HepG2 (cell line): ENCODE measurements at regions of chr2 and their contacts with region 1.

Region 1: DNA sequence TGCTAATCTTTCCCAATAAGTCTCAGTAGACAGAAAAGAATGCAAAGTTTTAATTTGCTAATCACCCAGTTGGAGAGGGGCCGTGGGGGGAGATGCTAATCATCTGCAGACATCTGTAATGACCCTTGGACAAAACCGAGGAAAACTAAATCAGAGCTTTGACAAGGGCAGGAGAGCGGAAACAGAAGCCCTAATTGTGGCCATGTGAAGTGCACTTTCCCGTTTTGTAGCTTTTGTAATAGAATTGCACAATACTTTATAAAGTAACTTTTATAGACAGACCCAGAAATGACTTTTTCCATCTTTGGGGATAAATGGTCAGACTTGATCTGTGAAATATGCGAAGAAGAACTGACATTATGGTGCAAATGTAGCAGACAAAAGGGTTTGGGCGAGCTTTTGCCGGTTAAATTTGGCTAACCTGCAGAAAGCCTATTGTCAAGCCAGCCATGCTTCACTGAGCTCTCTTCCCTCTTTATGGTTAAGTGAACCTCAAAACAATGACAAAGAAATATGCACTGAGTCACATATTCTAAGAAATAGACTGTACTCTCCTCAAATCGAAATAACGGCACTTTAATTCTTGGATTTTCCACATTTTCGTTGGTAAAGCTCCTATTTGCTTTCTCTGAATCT is 980.1 kb upstream of the POU3F3 start:
- DNase-seq: no peak
- ATAC-seq: no peak
- H3K4me3 ChIP-seq: no peak overlapping the region
- H3K27ac ChIP-seq: no peak overlapping the region
- H3K4me1 ChIP-seq: no peaks in the 10 kb centered on the region
- H3K27me3 ChIP-seq: no peaks in the 10 kb centered on the region
- CTCF ChIP-seq: no peak
- EP300 ChIP-seq: no peak
- POLR2A ChIP-seq: no peak
- RAD21 ChIP-seq: no peak

Region 2: GRCh38 chr2:103840276-103840675 is 33.6 kb before region 1 on chr2:
- CTCF ChIA-PET with region 1: no interaction called
- POLR2A ChIA-PET with region 1: no interaction called
- in situ Hi-C with region 1: no loop called
- intact Hi-C with region 1: no loop called
- DNase-seq: no peak
- ATAC-seq: no peak
- H3K4me3 ChIP-seq: no peak overlapping the region
- H3K27ac ChIP-seq: no peak overlapping the region
- H3K4me1 ChIP-seq: no peaks in the 10 kb centered on the region
- H3K27me3 ChIP-seq: no peaks in the 10 kb centered on the region
- CTCF ChIP-seq: no peak
- EP300 ChIP-seq: no peak
- POLR2A ChIP-seq: no peak
- RAD21 ChIP-seq: no peak

Region 3: DNA sequence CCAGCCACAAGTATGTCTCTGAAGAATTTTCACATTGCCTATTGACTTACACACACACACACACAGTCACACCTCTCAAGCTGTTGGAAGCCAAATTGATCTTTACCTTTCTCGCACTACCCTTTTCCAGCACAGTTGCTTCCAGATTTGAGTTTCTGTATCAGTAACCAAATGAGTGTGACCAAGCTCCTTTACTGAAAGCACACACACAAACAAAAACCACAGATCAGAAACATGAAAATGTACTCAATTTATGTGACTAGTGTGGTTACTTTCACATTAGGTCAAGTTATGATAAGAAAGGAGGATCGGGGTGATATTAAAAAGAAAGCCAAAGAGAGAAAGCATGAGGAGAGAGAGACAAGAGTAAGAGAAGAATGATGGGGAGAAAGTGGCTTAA is 13.8 kb before region 1 on chr2:
- CTCF ChIA-PET with region 1: no interaction called
- POLR2A ChIA-PET with region 1: no interaction called
- in situ Hi-C with region 1: no loop called
- intact Hi-C with region 1: no loop called
- DNase-seq: no peak
- ATAC-seq: no peak
- H3K4me3 ChIP-seq: no peak overlapping the region
- H3K27ac ChIP-seq: no peak overlapping the region
- H3K4me1 ChIP-seq: no peaks in the 10 kb centered on the region
- H3K27me3 ChIP-seq: no peaks in the 10 kb centered on the region
- CTCF ChIP-seq: no peak
- EP300 ChIP-seq: no peak
- POLR2A ChIP-seq: no peak
- RAD21 ChIP-seq: no peak

Region 4: GRCh38 chr2:103945083-103945482 is 71.2 kb after region 1 on chr2:
- CTCF ChIA-PET with region 1: no interaction called
- POLR2A ChIA-PET with region 1: no interaction called
- in situ Hi-C with region 1: no loop called
- intact Hi-C with region 1: no loop called
- DNase-seq: no peak
- ATAC-seq: no peak
- H3K4me3 ChIP-seq: no peak overlapping the region
- H3K27ac ChIP-seq: no peak overlapping the region
- H3K4me1 ChIP-seq: no peaks in the 10 kb centered on the region
- H3K27me3 ChIP-seq: no peaks in the 10 kb centered on the region
- CTCF ChIP-seq: no peak
- EP300 ChIP-seq: no peak
- POLR2A ChIP-seq: no peak
- RAD21 ChIP-seq: no peak

Region 5: DNA sequence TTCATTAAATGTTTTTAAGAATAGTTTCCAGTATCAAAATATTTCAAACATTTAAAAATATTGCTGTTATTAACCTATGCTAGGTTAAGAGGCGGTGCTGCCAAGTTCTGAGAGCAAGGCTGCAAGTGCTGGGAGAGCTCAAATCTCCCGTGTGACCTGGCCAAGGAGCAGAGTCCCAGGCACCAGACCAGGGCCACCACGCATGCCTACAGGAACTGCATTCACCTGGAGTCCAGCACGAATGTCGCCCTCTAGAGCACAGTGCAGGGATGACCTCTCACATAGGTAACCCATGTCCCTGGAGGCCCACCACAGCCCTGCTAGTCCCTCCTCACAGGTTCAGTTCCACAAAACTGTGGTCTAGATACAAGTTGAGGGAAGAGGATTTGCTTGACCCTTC is 859.7 kb after region 1 on chr2:
- CTCF ChIA-PET with region 1: no interaction called
- POLR2A ChIA-PET with region 1: no interaction called
- in situ Hi-C with region 1: no loop called
- intact Hi-C with region 1: loop called (anchors 5 kb)
- DNase-seq: peak; percentile 41
- ATAC-seq: peak; percentile 100
- H3K4me3 ChIP-seq: no peak overlapping the region
- H3K27ac ChIP-seq: no peak overlapping the region
- H3K4me1 ChIP-seq: no peaks in the 10 kb centered on the region
- H3K27me3 ChIP-seq: no peaks in the 10 kb centered on the region; a peak in 1 of 5 replicates
- CTCF ChIP-seq: peak; percentile 71
- EP300 ChIP-seq: no peak
- POLR2A ChIP-seq: no peak
- RAD21 ChIP-seq: peak; percentile 30; the same call in 1 of the 2 replicates